Activated T-helper 2 cell treated with anti-CD3 and anti-CD28 coated beads, Interferon-gamma antibody, Interleukin-2, Interleukin-4, amounts not matched to agents 10 μg/mL and 5 μg/mL and 100 μg/mL, durations not matched to agents 14 hours and 24 hours and 36 hours (primary cell): ENCODE measurements at regions of chr4 and their contacts with region 1.

Region 1: GRCh38 chr4:78584863-78585547 is 33.4 kb downstream of the ANXA3 start:
- DNase-seq: no peak
- H3K4me3 Mint-ChIP-seq: no peak overlapping the region
- H3K27ac Mint-ChIP-seq: no peak overlapping the region
- H3K4me1 Mint-ChIP-seq: peaks cover 2% of the 10 kb centered on the region
- H3K27me3 Mint-ChIP-seq: peaks cover 15% of the 10 kb centered on the region

Region 2: GRCh38 chr4:76696109-76696508 is 1888.9 kb before region 1 on chr4:
- intact Hi-C with region 1: loop called (anchors 5 kb)
- DNase-seq: no peak
- H3K4me3 Mint-ChIP-seq: no peak overlapping the region
- H3K27ac Mint-ChIP-seq: no peak overlapping the region
- H3K4me1 Mint-ChIP-seq: peaks cover 9% of the 10 kb centered on the region
- H3K27me3 Mint-ChIP-seq: peaks cover 36% of the 10 kb centered on the region

Region 3: GRCh38 chr4:78222575-78223186 is 362.3 kb before region 1 on chr4:
- intact Hi-C with region 1: no loop called
- DNase-seq: no peak
- H3K4me3 Mint-ChIP-seq: no peak overlapping the region
- H3K27ac Mint-ChIP-seq: no peak overlapping the region
- H3K4me1 Mint-ChIP-seq: no peaks in the 10 kb centered on the region
- H3K27me3 Mint-ChIP-seq: no peaks in the 10 kb centered on the region